ENCODE measurements at regions of chr1 and their contacts with region 1.

Region 1: GRCh38 chr1:156096640-156097391 is 14.6 kb upstream of the MEX3A start:
- ATAC-seq: peak; percentile 97 to 100 (median 99)
- H3K4me3 ChIP-seq: no peak overlapping the region
- H3K27ac ChIP-seq: no peak overlapping the region
- H3K4me1 ChIP-seq: peaks cover 5% of the 10 kb centered on the region in 2 donors

Region 2: DNA sequence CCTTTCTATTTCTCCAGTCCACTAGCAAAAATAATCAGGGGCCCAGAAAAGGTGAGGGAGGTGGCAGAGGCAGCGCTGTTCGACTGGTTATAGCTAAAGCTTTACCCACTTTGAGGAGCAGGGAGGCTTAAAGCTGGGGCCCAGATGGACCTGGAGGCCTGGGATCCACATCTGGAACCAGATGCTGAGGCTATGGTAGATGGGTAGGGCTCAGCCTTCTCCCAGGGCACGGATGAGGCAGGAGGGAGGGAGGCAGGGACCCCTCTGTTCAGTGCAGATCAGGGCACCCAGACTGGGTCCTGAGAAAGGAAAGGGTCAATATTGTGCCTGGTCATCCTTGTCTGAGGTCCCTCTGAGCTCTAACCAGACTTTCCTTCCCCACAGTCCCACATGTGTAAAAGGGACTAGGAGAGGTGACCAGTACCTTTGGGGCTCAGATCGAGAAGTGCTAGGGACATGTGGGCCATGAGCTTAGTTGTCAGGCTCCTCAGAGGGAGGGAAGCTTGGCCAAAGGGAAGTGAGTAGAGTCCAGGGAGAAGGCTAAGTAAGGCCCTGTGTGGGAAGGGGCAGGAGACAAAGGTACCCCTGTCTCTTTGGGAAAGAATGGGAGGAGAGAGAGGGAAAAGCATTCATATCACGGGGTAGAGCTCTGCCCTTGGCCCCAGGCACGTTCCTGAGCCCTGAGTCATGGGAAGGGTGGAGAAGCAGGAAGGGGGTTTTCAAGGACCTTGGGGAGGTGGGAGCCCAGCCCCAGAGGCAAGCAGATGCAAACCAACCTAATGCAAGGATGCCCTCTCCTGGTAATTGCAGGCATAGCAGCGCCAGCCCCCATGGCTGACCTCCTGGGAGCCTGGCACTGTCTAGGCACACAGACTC is 33.1 kb after region 1 on chr1:
- in situ Hi-C with region 1: loop called in 2 of 9 experiments (anchors 5 kb)
- ATAC-seq: peak; percentile 43 to 87 (median 82)
- H3K4me3 ChIP-seq: no peak overlapping the region
- H3K27ac ChIP-seq: peak overlapping the region; percentile 16 to 35
- H3K4me1 ChIP-seq: peaks cover 18 to 31% of the 10 kb centered on the region in 2 donors

Region 3: DNA sequence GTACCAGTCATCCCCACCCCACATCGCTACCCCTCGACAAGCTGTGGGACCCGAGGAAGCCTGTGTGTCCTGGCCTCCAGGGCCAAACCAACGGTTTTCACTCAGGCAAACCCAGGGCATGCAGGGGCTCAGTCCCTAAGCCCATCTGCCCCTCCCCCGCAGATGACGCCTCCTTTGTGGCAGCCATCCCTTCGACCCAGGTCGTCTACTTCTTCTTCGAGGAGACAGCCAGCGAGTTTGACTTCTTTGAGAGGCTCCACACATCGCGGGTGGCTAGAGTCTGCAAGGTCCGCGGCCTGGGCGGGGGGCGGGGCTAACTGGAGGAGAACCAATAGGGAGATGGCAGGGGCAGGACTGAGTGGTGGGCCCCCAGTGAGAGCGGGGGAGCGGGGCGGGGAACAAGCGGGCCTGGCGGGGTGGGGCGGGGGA is 63.9 kb after region 1 on chr1:
- in situ Hi-C with region 1: no loop called
- ATAC-seq: peak; percentile 82 to 94 (median 86)
- H3K4me3 ChIP-seq: peak overlapping the region; percentile 19 to 32 (median 30)
- H3K27ac ChIP-seq: peak overlapping the region in 1 of 2 donors; percentile 41
- H3K4me1 ChIP-seq: peaks cover 9 to 14% of the 10 kb centered on the region in 2 donors

Region 4: DNA sequence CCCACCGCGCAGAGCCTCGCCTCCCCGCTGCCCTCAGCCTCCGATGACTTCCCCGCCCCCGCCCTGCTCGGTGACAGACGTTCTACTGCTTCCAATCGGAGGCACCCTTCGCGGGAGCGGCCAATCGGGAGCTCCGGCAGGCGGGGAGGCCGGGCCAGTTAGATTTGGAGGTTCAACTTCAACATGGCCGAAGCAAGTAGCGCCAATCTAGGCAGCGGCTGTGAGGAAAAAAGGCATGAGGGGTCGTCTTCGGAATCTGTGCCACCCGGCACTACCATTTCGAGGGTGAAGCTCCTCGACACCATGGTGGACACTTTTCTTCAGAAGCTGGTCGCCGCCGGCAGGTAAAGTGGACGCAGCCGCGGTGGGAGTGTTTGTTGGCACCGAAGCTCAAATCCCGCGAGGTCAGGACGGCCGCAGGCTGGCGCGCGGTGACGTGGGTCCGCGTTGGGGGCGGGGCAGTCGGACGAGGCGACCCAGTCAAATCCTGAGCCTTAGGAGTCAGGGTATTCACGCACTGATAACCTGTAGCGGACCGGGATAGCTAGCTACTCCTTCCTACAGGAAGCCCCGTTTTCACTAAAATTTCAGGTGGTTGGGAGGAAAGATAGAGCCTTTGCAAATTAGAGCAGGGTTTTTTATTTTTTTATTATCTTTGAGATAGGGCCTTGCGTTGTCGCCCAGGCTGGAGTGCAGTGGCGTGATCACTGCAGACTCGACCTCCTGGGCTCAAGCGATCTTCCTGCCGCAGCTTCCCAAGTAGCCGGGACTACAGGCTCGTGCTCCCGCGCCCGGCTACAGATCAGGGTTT is 116.2 kb after region 1 on chr1 and contains the start of gene PMF1:
- in situ Hi-C with region 1: loop called in 2 of 9 experiments (anchors 25 kb)
- ATAC-seq: peak; percentile 93 to 96 (median 95)
- H3K4me3 ChIP-seq: peak within 1 kb of the TSS; percentile 58 to 82 (median 67)
- H3K27ac ChIP-seq: peak within 1 kb of the TSS; percentile 98 to 99
- H3K4me1 ChIP-seq: peaks cover 12% of the 10 kb centered on the region in 2 donors
- total RNA-seq, gene PMF1: 19.8 to 131 (median 46.3) TPM

Region 5: GRCh38 chr1:156226116-156226538 is 129.3 kb after region 1 on chr1:
- in situ Hi-C with region 1: loop called in 7 of 9 experiments (anchors 10 to 25 kb)
- ATAC-seq: no peak
- H3K4me3 ChIP-seq: no peak overlapping the region
- H3K27ac ChIP-seq: no peak overlapping the region
- H3K4me1 ChIP-seq: no peaks in the 10 kb centered on the region

Region 6: DNA sequence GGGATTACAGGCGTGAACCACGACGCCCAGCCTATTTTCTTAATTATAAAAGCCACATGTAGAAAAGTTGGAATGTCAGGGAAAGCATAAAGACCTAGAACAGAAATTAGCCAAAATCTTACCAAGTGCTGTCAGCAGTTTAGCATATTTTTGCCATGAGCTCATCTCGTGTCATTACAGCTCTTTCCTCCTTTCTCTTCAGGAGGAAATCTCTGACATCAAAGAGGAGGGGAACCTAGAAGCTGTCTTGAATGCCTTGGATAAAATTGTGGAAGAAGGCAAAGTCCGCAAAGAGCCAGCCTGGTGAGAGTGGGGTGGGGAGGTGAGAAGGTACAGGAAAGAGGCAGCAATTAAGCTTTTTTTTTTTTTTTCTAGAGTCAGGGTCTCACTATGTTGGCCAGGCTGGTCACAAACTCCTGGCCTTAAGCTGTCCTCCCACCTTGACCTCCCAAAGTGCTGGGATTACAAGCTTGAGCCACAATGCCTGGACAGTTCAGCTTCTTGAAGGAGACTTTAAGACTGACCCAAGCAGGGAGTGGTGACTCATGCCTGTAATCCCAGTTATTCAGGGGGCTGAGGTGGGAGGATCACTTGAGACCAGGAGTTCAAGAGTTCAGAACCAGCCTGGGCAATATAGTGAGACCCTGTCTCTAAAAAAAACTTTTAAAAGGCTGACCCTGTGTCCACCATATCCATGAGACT is 136.8 kb after region 1 on chr1:
- in situ Hi-C with region 1: loop called in 5 of 9 experiments (anchors 10 to 25 kb)
- ATAC-seq: peak in 2 of 8 experiments; percentile 38 to 62
- H3K4me3 ChIP-seq: no peak overlapping the region
- H3K27ac ChIP-seq: no peak overlapping the region
- H3K4me1 ChIP-seq: no peaks in the 10 kb centered on the region

Region 7: GRCh38 chr1:156245451-156246232 is 148.8 kb after region 1 on chr1:
- in situ Hi-C with region 1: loop called in 2 of 9 experiments (anchors 25 kb)
- ATAC-seq: peak in 4 of 8 experiments; percentile 6 to 51 (median 20)
- H3K4me3 ChIP-seq: no peak overlapping the region
- H3K27ac ChIP-seq: no peak overlapping the region
- H3K4me1 ChIP-seq: peaks cover 0 to 8% of the 10 kb centered on the region in 2 donors